ENCODE measurements at regions of chrX and their contacts with region 1.

Region 1: GRCh38 chrX:29225670-29226069 is 638.4 kb downstream of the IL1RAPL1 start:
- DNase-seq: no peak
- H3K4me3 ChIP-seq: no peak overlapping the region
- H3K27ac ChIP-seq: no peak overlapping the region
- H3K4me1 ChIP-seq: no peaks in the 10 kb centered on the region
- H3K27me3 ChIP-seq: no peaks in the 10 kb centered on the region
- CTCF ChIP-seq: no peak
- EP300 ChIP-seq: no peak
- POLR2A ChIP-seq: no peak

Region 2: GRCh38 chrX:29257521-29257920 is 31.9 kb after region 1 on chrX:
- intact Hi-C with region 1: loop called in 1 of 4 experiments (anchors 1 kb)
- DNase-seq: no peak
- H3K4me3 ChIP-seq: no peak overlapping the region
- H3K27ac ChIP-seq: no peak overlapping the region
- H3K4me1 ChIP-seq: no peaks in the 10 kb centered on the region
- H3K27me3 ChIP-seq: no peaks in the 10 kb centered on the region
- CTCF ChIP-seq: no peak
- EP300 ChIP-seq: no peak
- POLR2A ChIP-seq: no peak

Region 3: GRCh38 chrX:29269390-29269789 is 43.7 kb after region 1 on chrX:
- intact Hi-C with region 1: no loop called
- DNase-seq: no peak
- H3K4me3 ChIP-seq: no peak overlapping the region
- H3K27ac ChIP-seq: no peak overlapping the region
- H3K4me1 ChIP-seq: no peaks in the 10 kb centered on the region
- H3K27me3 ChIP-seq: no peaks in the 10 kb centered on the region
- CTCF ChIP-seq: no peak
- EP300 ChIP-seq: no peak
- POLR2A ChIP-seq: no peak